PC-9 (cell line): ENCODE measurements at regions of chr16 and their contacts with region 1.

Region 1: DNA sequence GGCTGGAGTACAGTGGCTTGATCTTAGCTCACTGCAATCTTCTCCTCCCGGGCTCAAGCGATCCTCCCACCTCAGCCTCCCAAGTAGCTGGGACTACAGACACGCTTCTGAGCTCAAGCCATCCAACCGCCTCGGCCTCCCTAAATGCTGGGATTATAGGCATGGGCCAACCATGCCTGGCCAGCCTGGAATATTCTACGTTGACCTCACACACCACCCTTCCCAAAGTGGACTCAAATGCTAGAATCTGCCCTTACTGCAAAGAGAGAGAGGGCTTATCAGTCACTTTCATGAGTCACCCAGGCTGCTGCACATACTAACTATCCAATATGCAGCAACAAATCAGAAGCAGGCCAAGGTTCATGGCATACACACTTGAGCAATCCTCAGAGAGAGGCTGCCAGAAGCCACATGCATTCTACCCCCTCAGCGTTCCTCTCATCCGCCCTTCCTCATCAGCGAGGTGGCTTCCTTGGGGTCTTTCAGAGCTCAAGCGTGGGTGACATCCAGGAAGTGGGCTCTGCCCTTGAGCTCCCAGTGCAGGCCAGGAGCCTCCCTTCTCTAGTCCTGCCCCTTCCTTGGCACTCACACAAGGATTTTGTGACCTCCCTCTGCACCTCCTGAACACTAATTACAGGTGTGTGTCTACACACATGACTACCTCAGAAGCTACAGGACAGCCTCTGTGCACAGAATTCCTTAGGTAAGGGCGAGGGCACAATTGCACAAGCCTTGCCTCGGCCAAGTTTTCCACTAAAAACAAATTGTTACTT is 24.8 kb upstream of the SIAH1 start:
- DNase-seq: peak; percentile 65 to 94
- H3K4me3 ChIP-seq: peak overlapping the region; percentile 24; the same call in 1 of the 2 replicates
- H3K27ac ChIP-seq: peak overlapping the region; percentile 75
- H3K4me1 ChIP-seq: peaks cover 54% of the 10 kb centered on the region
- H3K27me3 ChIP-seq: no peaks in the 10 kb centered on the region
- CTCF ChIP-seq: no peak

Region 2: GRCh38 chr16:46982335-46982734 is 1427.7 kb before region 1 on chr16:
- CTCF ChIA-PET with region 1: interaction called, 14 read pairs
- POLR2A ChIA-PET with region 1: no interaction called
- intact Hi-C with region 1: no loop called
- DNase-seq: no peak
- H3K4me3 ChIP-seq: no peak overlapping the region
- H3K27ac ChIP-seq: no peak overlapping the region
- H3K4me1 ChIP-seq: no peaks in the 10 kb centered on the region
- H3K27me3 ChIP-seq: no peaks in the 10 kb centered on the region
- CTCF ChIP-seq: no peak

Region 3: DNA sequence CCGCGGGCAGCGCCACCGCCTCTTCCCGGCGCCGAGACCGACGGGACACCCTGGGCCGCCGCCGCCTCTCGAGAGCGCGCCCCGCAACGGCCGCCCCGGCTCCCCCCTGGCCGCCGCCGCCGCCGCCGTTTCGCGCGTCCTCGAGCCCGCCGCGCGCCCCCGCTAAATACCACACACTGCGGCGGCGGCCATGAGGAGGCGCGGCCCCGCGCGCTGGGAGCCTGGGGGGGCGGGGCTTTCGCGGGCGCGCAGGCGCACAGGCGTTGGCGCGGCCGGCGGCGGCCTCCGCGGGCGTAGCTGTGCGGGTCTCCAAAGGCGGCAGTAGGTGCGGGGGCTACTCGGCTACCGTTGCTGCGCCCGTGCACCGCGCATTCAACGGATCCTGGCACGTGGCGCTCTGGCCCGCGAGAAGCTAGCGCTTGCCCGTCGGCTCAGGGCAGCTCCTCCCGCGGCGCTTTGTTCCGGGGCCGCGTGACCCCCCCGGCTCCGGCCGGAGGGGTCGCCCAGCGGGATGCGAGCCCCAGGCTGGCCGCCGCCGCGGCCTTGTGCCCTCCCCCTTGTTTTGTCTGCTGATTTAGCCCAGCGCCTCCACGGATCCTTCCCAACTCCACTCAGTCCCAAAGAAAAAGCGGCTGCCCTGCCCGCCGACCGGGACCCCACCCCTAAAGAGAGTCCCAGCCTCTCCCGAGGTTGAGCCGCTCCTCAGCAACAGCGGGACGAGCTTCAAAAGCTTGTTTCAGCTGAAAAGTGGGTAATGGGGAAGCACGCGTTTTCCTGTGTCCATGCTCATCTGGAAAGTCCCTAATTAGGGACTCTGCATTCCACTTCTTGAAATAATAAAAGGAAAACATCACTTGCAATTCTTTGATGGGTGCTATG is 24.5 kb before region 1 on chr16 and contains the start of gene SIAH1:
- CTCF ChIA-PET with region 1: interaction called, 9 read pairs
- POLR2A ChIA-PET with region 1: interaction called, 4 read pairs
- intact Hi-C with region 1: loop called (anchors 2 kb)
- DNase-seq: peak; percentile 51 to 88
- H3K4me3 ChIP-seq: peak within 1 kb of the TSS; percentile 82
- H3K27ac ChIP-seq: peak within 1 kb of the TSS; percentile 74
- H3K4me1 ChIP-seq: peaks cover 26% of the 10 kb centered on the region
- H3K27me3 ChIP-seq: no peaks in the 10 kb centered on the region
- CTCF ChIP-seq: no peak
- total RNA-seq, gene SIAH1: 18.6 and 22.8 TPM in 2 replicates

Region 4: GRCh38 chr16:48444574-48444973 is 34.5 kb after region 1 on chr16:
- CTCF ChIA-PET with region 1: no interaction called
- POLR2A ChIA-PET with region 1: no interaction called
- intact Hi-C with region 1: loop called (anchors 2 kb)
- DNase-seq: peak; percentile 41 to 84
- H3K4me3 ChIP-seq: peak overlapping the region; percentile 34; the same call in 1 of the 2 replicates
- H3K27ac ChIP-seq: peak overlapping the region; percentile 70
- H3K4me1 ChIP-seq: peaks cover 18% of the 10 kb centered on the region
- H3K27me3 ChIP-seq: no peaks in the 10 kb centered on the region
- CTCF ChIP-seq: no peak